Heart left ventricle (tissue), 16 donors: ENCODE measurements at regions of chr11 and their contacts with region 1.

Region 1: GRCh38 chr11:94183886-94184264 is 55.2 kb downstream of the PANX1 start:
- DNase-seq: peak; percentile 25 to 68 (median 46)
- ATAC-seq: peak in 3 of 4 donors; percentile 50 to 61 (median 60)
- H3K4me3 ChIP-seq: peak overlapping the region in 2 of 12 donors; percentile 1 to 34
- H3K27ac ChIP-seq: no peak overlapping the region
- H3K4me1 ChIP-seq: peaks cover 0 to 16% (median 2%) of the 10 kb centered on the region in 12 donors
- H3K27me3 ChIP-seq: no peaks in the 10 kb centered on the region
- CTCF ChIP-seq: peak; percentile 53 to 82 (median 70)
- POLR2A ChIP-seq: no peak

Region 2: GRCh38 chr11:94128746-94129511 is 54.9 kb before region 1 on chr11 and contains the start of gene PANX1:
- intact Hi-C with region 1: loop called in 2 of 10 experiments (anchors 5 to 10 kb)
- DNase-seq: peak; percentile 74 to 90 (median 88)
- ATAC-seq: peak; percentile 79 to 95 (median 92)
- H3K4me3 ChIP-seq: peak within 1 kb of the TSS; percentile 62 to 87 (median 83)
- H3K27ac ChIP-seq: peak within 1 kb of the TSS; percentile 83 to 98 (median 90)
- H3K4me1 ChIP-seq: peaks cover 0 to 55% (median 49%) of the 10 kb centered on the region in 12 donors
- H3K27me3 ChIP-seq: no peaks in the 10 kb centered on the region
- CTCF ChIP-seq: peak in 1 of 12 donors; percentile 7
- POLR2A ChIP-seq: peak in 1 of 2 donors; percentile 61
- total RNA-seq, gene PANX1: 14.3 to 57.5 (median 24.6) TPM

Region 3: DNA sequence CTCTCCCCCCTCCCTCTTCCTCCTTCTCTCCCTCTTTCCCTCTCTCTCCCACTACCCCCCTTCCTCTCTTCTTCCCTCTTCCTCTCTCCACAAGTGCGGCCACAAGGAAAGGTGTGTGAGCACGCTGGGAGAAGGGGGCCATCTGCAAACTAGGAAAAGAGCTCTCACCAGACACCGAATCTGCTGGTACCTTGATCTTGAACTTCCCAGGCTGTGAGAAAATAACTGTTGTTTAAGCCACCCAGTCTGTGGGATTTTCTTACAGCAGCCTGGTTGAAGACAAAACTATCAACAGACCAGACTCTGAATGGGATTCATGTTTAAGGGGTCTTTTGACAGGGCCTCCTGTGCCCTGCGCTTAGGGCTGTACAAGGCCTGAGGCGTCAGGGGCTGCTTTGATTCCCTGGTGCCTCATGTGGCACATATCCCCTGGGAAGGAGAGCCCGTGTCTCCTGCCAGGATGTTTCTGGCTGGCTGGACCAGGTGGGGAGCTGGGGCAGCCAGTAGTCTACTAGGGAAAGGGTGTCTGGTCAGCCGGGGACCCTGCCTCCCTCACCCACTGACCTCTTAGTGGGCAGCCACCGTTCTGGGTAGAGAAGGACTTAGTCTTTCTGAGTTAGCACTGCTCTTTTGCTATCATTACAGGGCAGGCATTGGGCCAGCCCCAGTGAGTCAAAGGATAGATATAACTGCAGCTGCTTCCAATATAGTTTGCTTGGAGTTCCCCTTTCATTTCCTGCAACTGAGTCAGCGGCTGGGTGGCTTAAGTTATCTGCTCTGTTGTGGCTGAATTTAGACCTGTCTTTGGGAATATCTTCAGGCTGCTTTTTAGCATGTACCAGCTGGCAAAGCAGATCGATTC is 49.0 kb before region 1 on chr11:
- intact Hi-C with region 1: loop called in 1 of 10 experiments (anchors 5 kb)
- DNase-seq: peak; percentile 76 to 89 (median 82)
- ATAC-seq: peak; percentile 63 to 87 (median 86)
- H3K4me3 ChIP-seq: peak overlapping the region in 3 of 12 donors; percentile 8 to 22 (median 16)
- H3K27ac ChIP-seq: peak overlapping the region; percentile 40 to 96 (median 75)
- H3K4me1 ChIP-seq: peaks cover 0 to 88% (median 68%) of the 10 kb centered on the region in 12 donors
- H3K27me3 ChIP-seq: no peaks in the 10 kb centered on the region
- CTCF ChIP-seq: no peak
- POLR2A ChIP-seq: no peak

Region 4: GRCh38 chr11:94151903-94152677 is 31.8 kb before region 1 on chr11:
- intact Hi-C with region 1: no loop called
- DNase-seq: peak; percentile 35 to 73 (median 64)
- ATAC-seq: peak; percentile 97 to 100 (median 98)
- H3K4me3 ChIP-seq: no peak overlapping the region
- H3K27ac ChIP-seq: peak overlapping the region in 11 of 12 donors; percentile 42 to 82 (median 72)
- H3K4me1 ChIP-seq: peaks cover 5 to 70% (median 38%) of the 10 kb centered on the region in 12 donors
- H3K27me3 ChIP-seq: no peaks in the 10 kb centered on the region
- CTCF ChIP-seq: no peak
- POLR2A ChIP-seq: no peak

Region 5: DNA sequence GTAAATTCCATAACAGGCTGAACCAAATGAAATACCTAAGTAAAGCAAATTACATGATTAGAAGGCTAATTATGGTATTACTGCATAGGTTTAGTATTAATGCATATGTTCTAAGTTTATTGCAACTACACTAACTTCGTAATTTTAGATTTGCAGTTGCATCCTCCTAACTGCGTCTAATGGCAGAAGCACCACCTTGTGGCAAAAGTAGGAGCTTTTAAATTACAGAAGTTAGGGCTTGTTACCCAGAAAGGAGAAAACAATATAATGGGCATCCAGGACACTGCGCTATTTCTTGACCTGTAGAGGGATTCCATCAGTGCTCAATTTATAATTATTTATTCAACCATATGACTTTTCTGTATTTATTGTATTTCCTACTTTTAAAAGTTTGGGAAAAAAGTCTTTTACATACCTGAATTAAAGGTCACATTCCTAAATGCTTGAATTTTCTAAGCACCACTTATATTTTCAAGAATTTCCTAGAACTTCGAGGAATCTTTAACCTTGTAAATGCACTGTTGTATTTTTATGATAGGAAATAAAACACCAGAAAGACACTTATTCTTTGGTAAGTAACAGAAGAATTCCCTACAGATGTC is 233.6 kb after region 1 on chr11:
- intact Hi-C with region 1: loop called in 7 of 10 experiments (anchors 2 to 10 kb)
- DNase-seq: no peak
- ATAC-seq: no peak
- H3K4me3 ChIP-seq: no peak overlapping the region
- H3K27ac ChIP-seq: no peak overlapping the region
- H3K4me1 ChIP-seq: peaks cover 0 to 3% (median 0%) of the 10 kb centered on the region in 12 donors
- H3K27me3 ChIP-seq: no peaks in the 10 kb centered on the region
- CTCF ChIP-seq: peak; percentile 31 to 70 (median 56)
- POLR2A ChIP-seq: no peak

Region 6: GRCh38 chr11:94493281-94494125 is 309.6 kb after region 1 on chr11 and contains the starts of genes ANKRD49 and MRE11:
- intact Hi-C with region 1: loop called in 1 of 10 experiments (anchors 10 kb)
- DNase-seq: peak; percentile 96 to 97 (median 96)
- ATAC-seq: peak; percentile 100
- H3K4me3 ChIP-seq: peak within 1 kb of the TSS; percentile 40 to 98 (median 85)
- H3K27ac ChIP-seq: peak within 1 kb of the TSS in 11 of 12 donors; percentile 36 to 85 (median 78)
- H3K4me1 ChIP-seq: peaks cover 0 to 33% (median 18%) of the 10 kb centered on the region in 12 donors
- H3K27me3 ChIP-seq: no peaks in the 10 kb centered on the region
- CTCF ChIP-seq: no peak
- POLR2A ChIP-seq: peak in 1 of 2 donors; percentile 66
- total RNA-seq, gene ANKRD49: 3.5 to 6.9 (median 5.7) TPM
- total RNA-seq, gene MRE11: 4.2 to 12.3 (median 8.4) TPM